Prostate gland (tissue), 2 donors: ENCODE measurements at regions of chr3 and their contacts with region 1.

Region 1: GRCh38 chr3:42732829-42733459 is 30.3 kb upstream of the HHATL start:
- DNase-seq: no peak
- H3K4me3 ChIP-seq: no peak overlapping the region
- H3K27ac ChIP-seq: no peak overlapping the region
- H3K4me1 ChIP-seq: no peaks in the 10 kb centered on the region
- H3K27me3 ChIP-seq: no peaks in the 10 kb centered on the region
- CTCF ChIP-seq: no peak
- POLR2A ChIP-seq: no peak

Region 2: DNA sequence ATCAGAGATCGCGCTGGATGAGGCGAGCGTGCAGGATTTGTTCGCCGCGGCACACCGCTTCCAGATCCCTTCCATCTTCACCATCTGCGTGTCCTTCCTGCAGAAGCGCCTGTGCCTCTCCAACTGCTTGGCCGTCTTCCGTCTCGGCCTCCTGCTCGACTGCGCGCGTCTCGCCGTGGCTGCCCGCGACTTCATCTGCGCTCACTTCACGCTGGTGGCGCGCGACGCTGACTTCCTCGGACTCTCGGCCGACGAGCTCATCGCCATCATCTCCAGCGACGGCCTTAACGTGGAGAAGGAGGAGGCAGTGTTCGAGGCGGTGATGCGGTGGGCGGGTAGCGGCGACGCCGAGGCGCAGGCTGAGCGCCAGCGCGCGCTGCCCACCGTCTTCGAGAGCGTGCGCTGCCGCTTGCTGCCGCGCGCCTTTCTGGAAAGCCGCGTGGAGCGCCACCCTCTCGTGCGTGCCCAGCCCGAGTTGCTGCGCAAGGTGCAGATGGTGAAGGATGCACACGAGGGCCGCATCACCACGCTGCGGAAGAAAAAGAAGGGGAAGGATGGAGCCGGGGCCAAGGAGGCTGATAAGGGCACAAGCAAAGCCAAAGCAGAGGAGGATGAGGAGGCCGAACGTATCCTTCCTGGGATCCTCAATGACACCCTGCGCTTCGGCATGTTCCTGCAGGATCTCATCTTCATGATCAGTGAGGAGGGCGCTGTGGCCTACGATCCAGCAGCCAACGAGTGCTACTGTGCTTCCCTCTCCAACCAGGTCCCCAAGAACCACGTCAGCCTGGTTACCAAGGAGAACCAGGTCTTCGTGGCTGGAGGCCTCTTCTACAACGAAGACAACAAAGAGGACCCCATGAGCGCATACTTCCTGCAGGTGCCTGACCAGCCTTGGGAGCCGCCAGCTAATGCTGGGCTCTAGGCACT is 46.8 kb before region 1 on chr3:
- intact Hi-C with region 1: loop called (anchors 5 kb)
- DNase-seq: no peak
- H3K4me3 ChIP-seq: peak overlapping the region in 1 of 2 donors; percentile 6
- H3K27ac ChIP-seq: no peak overlapping the region
- H3K4me1 ChIP-seq: no peaks in the 10 kb centered on the region
- H3K27me3 ChIP-seq: peaks cover 3% of the 10 kb centered on the region
- CTCF ChIP-seq: no peak
- POLR2A ChIP-seq: no peak

Region 3: DNA sequence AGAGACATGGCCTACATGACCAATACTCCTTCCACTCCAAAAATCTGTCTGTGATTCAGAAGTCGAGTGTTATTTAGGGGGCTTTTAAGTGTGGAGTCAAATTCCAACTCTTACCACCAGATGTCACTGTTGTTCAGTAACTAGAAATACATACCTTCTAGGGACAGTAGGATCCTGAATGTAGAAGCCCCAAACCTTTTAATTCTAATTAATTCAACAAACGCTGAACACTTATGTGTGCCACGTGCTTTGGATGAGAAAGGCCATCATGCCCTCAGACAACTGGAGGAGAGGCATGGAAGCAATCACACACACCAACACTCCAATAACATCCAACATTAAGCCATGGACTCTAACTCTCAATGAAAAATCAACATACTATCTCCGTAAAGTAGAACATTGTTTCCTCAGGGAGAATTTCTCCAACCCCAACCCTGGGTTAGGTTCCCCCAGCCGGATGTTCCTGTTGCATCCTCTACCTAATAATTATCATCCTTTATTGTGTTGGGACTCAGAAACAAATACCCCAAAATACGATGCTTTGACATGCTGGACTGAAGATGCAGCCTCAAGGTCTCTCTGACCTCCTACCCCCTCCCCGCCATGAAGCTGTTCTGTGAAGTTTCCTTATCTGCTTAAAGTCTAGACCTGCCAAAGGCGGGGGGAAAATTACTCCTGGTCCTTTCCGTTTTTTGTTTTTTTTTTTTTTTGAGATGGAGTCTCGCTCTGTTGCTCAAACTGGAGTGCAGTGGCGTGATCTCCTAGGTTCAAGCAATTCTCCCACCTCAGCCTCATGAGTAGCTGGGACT is 48.2 kb after region 1 on chr3:
- intact Hi-C with region 1: no loop called
- DNase-seq: peak; percentile 37
- H3K4me3 ChIP-seq: no peak overlapping the region
- H3K27ac ChIP-seq: peak overlapping the region in 1 of 2 donors; percentile 37
- H3K4me1 ChIP-seq: no peaks in the 10 kb centered on the region
- H3K27me3 ChIP-seq: no peaks in the 10 kb centered on the region
- CTCF ChIP-seq: peak; percentile 52 to 89 (median 84)
- POLR2A ChIP-seq: no peak